ENCODE measurements at regions of chr1 and their contacts with region 1.

Region 1: DNA sequence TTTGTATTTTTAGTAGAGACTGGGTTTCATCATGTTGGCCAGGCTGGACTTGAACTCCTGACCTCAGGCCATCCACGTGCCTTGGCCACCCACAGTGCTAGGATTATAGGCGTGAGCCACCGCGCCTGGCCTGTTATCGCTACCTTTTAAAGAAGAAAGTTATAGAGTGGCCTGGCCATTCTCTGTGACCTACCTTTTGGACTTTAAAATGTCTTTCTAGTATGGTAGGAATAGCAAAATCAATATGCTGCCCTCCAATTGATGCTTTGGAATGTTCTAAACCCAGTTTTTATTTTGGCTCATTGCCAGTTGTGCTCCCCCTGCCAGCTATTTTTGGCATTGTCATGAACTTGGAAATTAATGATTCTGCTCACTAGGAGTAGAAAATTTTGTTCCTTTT is 19.9 kb downstream of the HIPK1 start:
- DNase-seq: peak in 2 of 9 experiments; percentile 48 to 59
- ATAC-seq: no peak
- H3K4me3 ChIP-seq: no peak overlapping the region
- H3K4me3 Mint-ChIP-seq: peak overlapping the region; percentile 6
- H3K27ac ChIP-seq: peak overlapping the region; percentile 31 to 65
- H3K27ac Mint-ChIP-seq: peak overlapping the region; percentile 93
- H3K4me1 ChIP-seq: peaks cover 81% of the 10 kb centered on the region
- H3K4me1 Mint-ChIP-seq: peaks cover 82% of the 10 kb centered on the region
- H3K27me3 ChIP-seq: no peaks in the 10 kb centered on the region
- H3K27me3 Mint-ChIP-seq: no peaks in the 10 kb centered on the region
- CTCF ChIP-seq: peak; percentile 68

Region 2: GRCh38 chr1:113934511-113935055 is 14.4 kb before region 1 on chr1:
- CTCF ChIA-PET with region 1: interaction called, 53 read pairs
- POLR2A ChIA-PET with region 1: interaction called, 40 read pairs
- intact Hi-C with region 1: loop called (anchors 1 kb)
- DNase-seq: peak in 1 of 9 experiments; percentile 43
- ATAC-seq: no peak
- H3K4me3 ChIP-seq: no peak overlapping the region
- H3K4me3 Mint-ChIP-seq: peak overlapping the region; percentile 89
- H3K27ac ChIP-seq: peak overlapping the region in 1 of 2 experiments; percentile 33
- H3K27ac Mint-ChIP-seq: peak overlapping the region; percentile 98
- H3K4me1 ChIP-seq: peaks cover 81% of the 10 kb centered on the region
- H3K4me1 Mint-ChIP-seq: peaks cover 84% of the 10 kb centered on the region
- H3K27me3 ChIP-seq: no peaks in the 10 kb centered on the region
- H3K27me3 Mint-ChIP-seq: no peaks in the 10 kb centered on the region
- CTCF ChIP-seq: no peak

Region 3: DNA sequence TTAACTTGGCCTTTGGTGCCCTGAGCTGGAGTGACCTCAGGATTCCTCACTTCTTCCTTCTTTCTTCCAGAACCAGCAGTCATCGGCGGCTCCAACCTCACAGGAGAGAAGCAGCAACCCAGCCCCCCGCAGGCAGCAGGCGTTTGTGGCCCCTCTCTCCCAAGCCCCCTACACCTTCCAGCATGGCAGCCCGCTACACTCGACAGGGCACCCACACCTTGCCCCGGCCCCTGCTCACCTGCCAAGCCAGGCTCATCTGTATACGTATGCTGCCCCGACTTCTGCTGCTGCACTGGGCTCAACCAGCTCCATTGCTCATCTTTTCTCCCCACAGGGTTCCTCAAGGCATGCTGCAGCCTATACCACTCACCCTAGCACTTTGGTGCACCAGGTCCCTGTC is 23.9 kb after region 1 on chr1:
- CTCF ChIA-PET with region 1: interaction called, 6 read pairs
- POLR2A ChIA-PET with region 1: interaction called, 3 read pairs
- intact Hi-C with region 1: loop called (anchors 2 to 5 kb)
- DNase-seq: no peak
- ATAC-seq: no peak
- H3K4me3 ChIP-seq: no peak overlapping the region
- H3K4me3 Mint-ChIP-seq: no peak overlapping the region
- H3K27ac ChIP-seq: no peak overlapping the region
- H3K27ac Mint-ChIP-seq: no peak overlapping the region
- H3K4me1 ChIP-seq: peaks cover 12% of the 10 kb centered on the region
- H3K4me1 Mint-ChIP-seq: peaks cover 43% of the 10 kb centered on the region
- H3K27me3 ChIP-seq: no peaks in the 10 kb centered on the region
- H3K27me3 Mint-ChIP-seq: no peaks in the 10 kb centered on the region
- CTCF ChIP-seq: no peak